Activated B cell treated with CpG ODN at 0.5 μM for 24 hours (primary cell): ENCODE measurements at regions of chr2 and their contacts with region 1.

Region 1: DNA sequence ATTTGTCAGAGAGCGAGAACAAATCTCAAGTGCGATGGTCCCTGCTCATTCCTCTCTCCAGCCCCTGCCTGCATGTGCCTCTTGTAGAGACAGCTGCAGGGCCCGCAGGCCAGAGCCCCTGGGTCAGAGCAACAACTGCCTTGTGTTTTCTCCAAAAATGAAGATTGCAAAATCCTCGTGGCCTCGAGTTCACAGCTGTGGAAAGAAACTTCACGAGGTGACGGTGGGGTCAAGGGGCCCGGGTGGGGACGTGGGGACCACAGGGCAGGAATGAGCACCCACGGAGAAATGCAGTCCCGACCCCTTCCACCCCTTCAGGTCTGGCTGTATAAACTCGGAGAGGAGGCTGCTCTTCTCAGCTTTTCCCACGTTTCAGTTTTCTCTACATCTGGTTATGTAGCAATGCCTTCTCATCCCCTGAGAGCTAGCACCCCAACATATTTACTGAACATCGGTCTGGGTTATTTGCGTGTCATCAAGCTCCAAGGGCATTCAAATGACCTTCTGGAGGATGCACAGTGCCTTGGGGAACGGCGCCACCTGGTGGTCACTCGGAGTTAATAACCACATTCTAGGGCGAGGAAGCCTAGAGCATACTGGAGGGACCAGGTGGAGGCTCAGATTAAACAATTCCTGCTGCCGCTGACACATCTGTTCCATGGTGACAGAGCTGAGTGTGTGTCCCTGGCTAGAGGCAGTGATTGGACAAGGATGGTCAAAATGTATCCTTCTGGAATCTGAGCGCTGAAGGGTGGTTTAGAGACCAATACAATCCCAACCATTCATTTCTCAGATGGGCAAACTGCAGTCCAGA is 91.4 kb upstream of the CYRIA start:
- DNase-seq: peak; percentile 72
- ATAC-seq: peak; percentile 98
- H3K4me3 Mint-ChIP-seq: no peak overlapping the region
- H3K27ac Mint-ChIP-seq: peak overlapping the region; percentile 16
- H3K4me1 Mint-ChIP-seq: peaks cover 4% of the 10 kb centered on the region
- H3K27me3 Mint-ChIP-seq: no peaks in the 10 kb centered on the region
- CTCF ChIP-seq: no peak

Region 2: DNA sequence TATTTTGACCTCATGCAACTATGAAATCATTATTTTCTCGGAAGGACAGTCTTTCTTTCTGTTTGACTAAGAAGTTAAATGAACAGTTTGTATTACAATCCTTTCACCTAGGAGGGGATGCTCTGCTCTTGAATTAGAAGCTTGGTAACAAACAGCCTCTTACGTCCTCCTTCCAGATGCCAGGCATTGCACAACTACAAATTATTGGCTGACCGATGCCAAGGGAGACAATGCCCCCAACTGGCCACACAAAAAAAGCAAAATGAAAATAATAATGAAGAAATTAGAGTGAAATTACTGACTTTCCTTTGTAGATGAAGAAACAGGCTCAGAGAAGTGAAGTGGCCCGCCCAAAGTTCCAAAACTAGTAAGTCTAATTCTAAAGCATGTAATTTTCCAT is 269.4 kb before region 1 on chr2:
- CTCF ChIA-PET with region 1: no interaction called
- POLR2A ChIA-PET with region 1: no interaction called
- intact Hi-C with region 1: no loop called
- DNase-seq: no peak
- ATAC-seq: no peak
- H3K4me3 Mint-ChIP-seq: no peak overlapping the region
- H3K27ac Mint-ChIP-seq: no peak overlapping the region
- H3K4me1 Mint-ChIP-seq: no peaks in the 10 kb centered on the region
- H3K27me3 Mint-ChIP-seq: peaks cover 17% of the 10 kb centered on the region
- CTCF ChIP-seq: no peak

Region 3: GRCh38 chr2:16553226-16553625 is 203.8 kb before region 1 on chr2:
- CTCF ChIA-PET with region 1: interaction called, 15 read pairs
- POLR2A ChIA-PET with region 1: no interaction called
- intact Hi-C with region 1: loop called (anchors 1 kb)
- DNase-seq: no peak
- ATAC-seq: no peak
- H3K4me3 Mint-ChIP-seq: no peak overlapping the region
- H3K27ac Mint-ChIP-seq: no peak overlapping the region
- H3K4me1 Mint-ChIP-seq: no peaks in the 10 kb centered on the region
- H3K27me3 Mint-ChIP-seq: no peaks in the 10 kb centered on the region
- CTCF ChIP-seq: no peak

Region 4: GRCh38 chr2:16617282-16618261 is 139.5 kb before region 1 on chr2:
- CTCF ChIA-PET with region 1: interaction called, 129 read pairs
- POLR2A ChIA-PET with region 1: interaction called, 4 read pairs
- intact Hi-C with region 1: loop called (anchors 1 kb)
- DNase-seq: no peak
- ATAC-seq: no peak
- H3K4me3 Mint-ChIP-seq: no peak overlapping the region
- H3K27ac Mint-ChIP-seq: peak overlapping the region; percentile 56
- H3K4me1 Mint-ChIP-seq: peaks cover 67% of the 10 kb centered on the region
- H3K27me3 Mint-ChIP-seq: no peaks in the 10 kb centered on the region
- CTCF ChIP-seq: no peak

Region 5: DNA sequence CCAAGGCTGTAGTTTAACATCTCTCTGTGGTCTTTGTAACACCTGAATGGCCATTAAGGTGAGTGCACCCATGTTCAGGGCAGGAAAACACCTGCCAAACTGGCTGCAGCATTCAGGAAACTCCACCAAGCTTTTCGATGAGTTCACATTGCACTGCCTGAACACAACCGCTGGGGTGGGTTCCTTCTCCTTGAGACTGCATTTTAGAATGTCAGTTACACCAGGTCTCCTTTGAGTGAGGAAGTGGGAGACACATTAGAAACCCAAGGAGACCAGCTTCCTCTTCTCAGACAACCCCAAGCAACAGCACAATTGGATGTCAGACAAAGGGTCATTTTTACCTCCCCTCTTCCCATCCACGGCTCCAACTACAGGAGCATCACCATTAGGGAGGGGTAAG is 126.6 kb before region 1 on chr2:
- CTCF ChIA-PET with region 1: interaction called, 65 read pairs
- POLR2A ChIA-PET with region 1: interaction called, 3 read pairs
- intact Hi-C with region 1: loop called (anchors 1 kb)
- DNase-seq: no peak
- ATAC-seq: peak; percentile 64
- H3K4me3 Mint-ChIP-seq: no peak overlapping the region
- H3K27ac Mint-ChIP-seq: peak overlapping the region; percentile 83
- H3K4me1 Mint-ChIP-seq: peaks cover 99% of the 10 kb centered on the region
- H3K27me3 Mint-ChIP-seq: no peaks in the 10 kb centered on the region
- CTCF ChIP-seq: no peak

Region 6: DNA sequence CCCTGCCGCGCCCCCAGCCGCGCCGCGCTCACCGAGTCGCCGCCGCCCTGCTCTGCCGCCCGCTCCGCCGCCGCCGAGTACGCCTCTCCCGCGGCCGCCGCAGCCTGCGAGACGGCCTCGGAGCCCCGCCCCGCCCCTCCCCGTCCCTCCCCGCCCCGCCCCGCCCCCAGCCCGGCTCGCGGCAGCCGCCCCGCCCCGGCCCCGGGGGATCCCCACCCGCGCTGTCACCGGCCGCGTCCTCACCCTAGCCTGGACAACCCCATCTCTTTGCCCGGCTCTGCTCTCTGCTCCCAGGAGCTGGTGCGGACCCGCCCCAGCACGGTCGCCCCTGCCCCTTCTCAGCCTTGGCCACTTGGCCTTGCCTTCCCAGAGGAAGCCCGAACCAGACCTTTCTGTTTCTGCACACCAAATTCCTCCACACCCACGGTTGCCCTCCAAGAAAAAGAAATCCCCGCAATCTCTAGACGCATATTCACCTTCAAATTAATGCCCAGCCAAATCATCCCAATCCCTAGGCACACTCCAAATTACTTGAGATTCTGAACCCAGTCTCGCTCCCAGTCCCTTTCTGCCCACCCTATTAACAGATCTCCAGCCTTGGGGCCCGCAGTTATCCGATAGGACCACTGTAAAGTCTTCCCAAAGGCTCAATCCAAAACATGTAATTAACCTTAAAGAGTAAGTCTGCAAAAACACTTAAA is 91.1 kb before region 1 on chr2 and contains the start of gene CYRIA:
- CTCF ChIA-PET with region 1: interaction called, 10 read pairs
- POLR2A ChIA-PET with region 1: interaction called, 4 read pairs
- intact Hi-C with region 1: no loop called
- DNase-seq: peak; percentile 70
- ATAC-seq: peak; percentile 69
- H3K4me3 Mint-ChIP-seq: peak within 1 kb of the TSS; percentile 97
- H3K27ac Mint-ChIP-seq: peak within 1 kb of the TSS; percentile 96
- H3K4me1 Mint-ChIP-seq: peaks cover 58% of the 10 kb centered on the region
- H3K27me3 Mint-ChIP-seq: no peaks in the 10 kb centered on the region
- CTCF ChIP-seq: no peak
- total RNA-seq, gene CYRIA: 72.7 and 76.1 TPM in 2 replicates

Region 7: GRCh38 chr2:16718576-16719466 is 38.2 kb before region 1 on chr2:
- CTCF ChIA-PET with region 1: interaction called, 10 read pairs
- POLR2A ChIA-PET with region 1: no interaction called
- intact Hi-C with region 1: no loop called
- DNase-seq: no peak
- ATAC-seq: no peak
- H3K4me3 Mint-ChIP-seq: no peak overlapping the region
- H3K27ac Mint-ChIP-seq: peak overlapping the region; percentile 73
- H3K4me1 Mint-ChIP-seq: peaks cover 50% of the 10 kb centered on the region
- H3K27me3 Mint-ChIP-seq: no peaks in the 10 kb centered on the region
- CTCF ChIP-seq: no peak

Region 8: GRCh38 chr2:16973586-16974286 is 216.7 kb after region 1 on chr2:
- CTCF ChIA-PET with region 1: no interaction called
- POLR2A ChIA-PET with region 1: no interaction called
- intact Hi-C with region 1: no loop called
- DNase-seq: no peak
- ATAC-seq: no peak
- H3K4me3 Mint-ChIP-seq: no peak overlapping the region
- H3K27ac Mint-ChIP-seq: no peak overlapping the region
- H3K4me1 Mint-ChIP-seq: peaks cover 14% of the 10 kb centered on the region
- H3K27me3 Mint-ChIP-seq: no peaks in the 10 kb centered on the region
- CTCF ChIP-seq: no peak

Region 9: GRCh38 chr2:17646081-17646554 is 889.1 kb after region 1 on chr2:
- CTCF ChIA-PET with region 1: no interaction called
- POLR2A ChIA-PET with region 1: no interaction called
- intact Hi-C with region 1: no loop called
- DNase-seq: no peak
- ATAC-seq: peak; percentile 86
- H3K4me3 Mint-ChIP-seq: peak overlapping the region; percentile 24
- H3K27ac Mint-ChIP-seq: peak overlapping the region; percentile 31
- H3K4me1 Mint-ChIP-seq: peaks cover 18% of the 10 kb centered on the region
- H3K27me3 Mint-ChIP-seq: no peaks in the 10 kb centered on the region
- CTCF ChIP-seq: peak; percentile 89